CD4-positive, alpha-beta T cell (primary cell): ENCODE measurements at regions of chr5 and their contacts with region 1.

Region 1: GRCh38 chr5:112757468-112758208 is 20.0 kb downstream of the APC start:
- DNase-seq: peak in 3 of 14 experiments; percentile 74 to 76 (median 75)
- ATAC-seq: peak; percentile 84
- H3K4me3 ChIP-seq: no peak overlapping the region
- H3K4me3 Mint-ChIP-seq: no peak overlapping the region
- H3K27ac ChIP-seq: no peak overlapping the region
- H3K27ac Mint-ChIP-seq: peak overlapping the region; percentile 60
- H3K4me1 ChIP-seq: peaks cover 3% of the 10 kb centered on the region
- H3K4me1 Mint-ChIP-seq: peaks cover 25% of the 10 kb centered on the region
- H3K27me3 ChIP-seq: no peaks in the 10 kb centered on the region
- H3K27me3 Mint-ChIP-seq: no peaks in the 10 kb centered on the region
- CTCF ChIP-seq: peak; percentile 84

Region 2: GRCh38 chr5:112174959-112175594 is 582.6 kb before region 1 on chr5:
- CTCF ChIA-PET with region 1: interaction called, 6 read pairs
- POLR2A ChIA-PET with region 1: no interaction called
- intact Hi-C with region 1: loop called (anchors 1 to 2 kb)
- DNase-seq: peak in 6 of 14 experiments; percentile 1 to 70 (median 46)
- ATAC-seq: peak; percentile 56
- H3K4me3 ChIP-seq: no peak overlapping the region
- H3K4me3 Mint-ChIP-seq: no peak overlapping the region
- H3K27ac ChIP-seq: no peak overlapping the region
- H3K27ac Mint-ChIP-seq: no peak overlapping the region
- H3K4me1 ChIP-seq: peaks cover 3% of the 10 kb centered on the region
- H3K4me1 Mint-ChIP-seq: no peaks in the 10 kb centered on the region
- H3K27me3 ChIP-seq: no peaks in the 10 kb centered on the region
- H3K27me3 Mint-ChIP-seq: peaks cover 14% of the 10 kb centered on the region
- CTCF ChIP-seq: peak; percentile 75

Region 3: GRCh38 chr5:112551419-112552032 is 206.1 kb before region 1 on chr5:
- CTCF ChIA-PET with region 1: interaction called, 27 read pairs
- POLR2A ChIA-PET with region 1: interaction called, 3 read pairs
- intact Hi-C with region 1: loop called (anchors 1 kb)
- DNase-seq: peak in 9 of 14 experiments; percentile 3 to 76 (median 25)
- ATAC-seq: peak; percentile 52
- H3K4me3 ChIP-seq: no peak overlapping the region
- H3K4me3 Mint-ChIP-seq: no peak overlapping the region
- H3K27ac ChIP-seq: no peak overlapping the region
- H3K27ac Mint-ChIP-seq: no peak overlapping the region
- H3K4me1 ChIP-seq: no peaks in the 10 kb centered on the region
- H3K4me1 Mint-ChIP-seq: no peaks in the 10 kb centered on the region
- H3K27me3 ChIP-seq: peaks cover 2 to 7% of the 10 kb centered on the region in 2 experiments
- H3K27me3 Mint-ChIP-seq: peaks cover 4% of the 10 kb centered on the region
- CTCF ChIP-seq: peak; percentile 92

Region 4: DNA sequence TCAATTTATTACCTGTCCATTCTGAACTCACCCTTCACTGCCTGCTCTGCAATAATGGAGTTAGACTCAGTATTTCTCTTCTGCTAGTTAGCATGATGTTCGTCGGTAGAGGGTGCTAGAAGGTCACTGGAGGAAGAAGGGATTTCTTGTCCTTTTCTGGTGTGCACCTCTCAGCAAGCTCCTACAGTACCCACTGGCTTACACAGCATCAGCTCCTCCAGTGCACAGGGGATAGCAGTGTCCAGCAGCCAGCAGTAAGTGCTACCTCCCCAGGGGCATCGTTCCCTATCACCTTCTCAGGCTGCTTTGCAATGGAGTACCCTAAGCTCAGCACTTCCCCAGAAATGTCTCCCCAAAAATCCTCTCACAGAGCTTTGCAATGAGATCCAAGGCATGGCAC is 65.9 kb before region 1 on chr5:
- CTCF ChIA-PET with region 1: interaction called, 10 read pairs
- POLR2A ChIA-PET with region 1: no interaction called
- intact Hi-C with region 1: loop called (anchors 1 to 2 kb)
- DNase-seq: peak in 5 of 14 experiments; percentile 17 to 75 (median 32)
- ATAC-seq: no peak
- H3K4me3 ChIP-seq: no peak overlapping the region
- H3K4me3 Mint-ChIP-seq: no peak overlapping the region
- H3K27ac ChIP-seq: no peak overlapping the region
- H3K27ac Mint-ChIP-seq: no peak overlapping the region
- H3K4me1 ChIP-seq: no peaks in the 10 kb centered on the region
- H3K4me1 Mint-ChIP-seq: no peaks in the 10 kb centered on the region
- H3K27me3 ChIP-seq: peaks cover 0 to 16% of the 10 kb centered on the region in 2 experiments
- H3K27me3 Mint-ChIP-seq: peaks cover 53% of the 10 kb centered on the region
- CTCF ChIP-seq: no peak

Region 5: DNA sequence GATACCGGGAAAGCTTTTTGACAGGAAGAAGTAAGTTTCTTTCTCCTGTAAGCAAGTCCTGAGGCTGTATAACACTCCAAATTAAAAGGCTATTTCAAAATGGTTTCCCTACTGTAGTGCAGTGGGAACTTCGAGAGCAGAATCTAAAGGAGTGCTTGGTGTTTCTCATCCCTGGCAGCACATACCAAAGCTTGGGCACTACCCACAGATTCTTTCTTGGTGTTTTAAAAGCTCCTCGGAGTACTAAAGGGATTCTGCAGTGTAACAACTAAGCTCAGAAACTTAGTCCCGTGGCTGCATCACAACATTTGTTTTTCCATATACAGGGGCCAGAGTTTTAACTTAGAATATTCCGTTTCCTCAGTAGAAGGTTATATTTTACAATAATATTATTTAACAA is 25.5 kb before region 1 on chr5:
- CTCF ChIA-PET with region 1: no interaction called
- POLR2A ChIA-PET with region 1: no interaction called
- intact Hi-C with region 1: no loop called
- DNase-seq: no peak
- ATAC-seq: no peak
- H3K4me3 ChIP-seq: no peak overlapping the region
- H3K4me3 Mint-ChIP-seq: no peak overlapping the region
- H3K27ac ChIP-seq: no peak overlapping the region
- H3K27ac Mint-ChIP-seq: no peak overlapping the region
- H3K4me1 ChIP-seq: no peaks in the 10 kb centered on the region
- H3K4me1 Mint-ChIP-seq: peaks cover 55% of the 10 kb centered on the region
- H3K27me3 ChIP-seq: no peaks in the 10 kb centered on the region
- H3K27me3 Mint-ChIP-seq: no peaks in the 10 kb centered on the region
- CTCF ChIP-seq: no peak